Activated CD8-positive, alpha-beta T cell treated with anti-CD3 and anti-CD28 coated beads, Interleukin-2, amount 10 ng/mL, durations not matched to agents 7 days and 5 days (primary cell): ENCODE measurements at regions of chr12 and their contacts with region 1.

Region 1: GRCh38 chr12:56158029-56158925 is at the start of gene MYL6:
- DNase-seq: peak; percentile 97
- ATAC-seq: peak; percentile 83
- H3K4me3 Mint-ChIP-seq: peak within 1 kb of the TSS; percentile 90
- H3K27ac Mint-ChIP-seq: peak within 1 kb of the TSS; percentile 96
- H3K4me1 Mint-ChIP-seq: peaks cover 61% of the 10 kb centered on the region
- H3K27me3 Mint-ChIP-seq: no peaks in the 10 kb centered on the region
- total RNA-seq, gene MYL6: 1,527 to 1,542 TPM

Region 2: GRCh38 chr12:56117778-56118687 is 40.2 kb before region 1 on chr12 and contains the start of gene ZC3H10:
- CTCF ChIA-PET with region 1: interaction called, 20 read pairs
- POLR2A ChIA-PET with region 1: interaction called, 77 read pairs
- DNase-seq: peak; percentile 100
- ATAC-seq: peak; percentile 76
- H3K4me3 Mint-ChIP-seq: peak within 1 kb of the TSS; percentile 100
- H3K27ac Mint-ChIP-seq: peak within 1 kb of the TSS; percentile 100
- H3K4me1 Mint-ChIP-seq: peaks cover 39% of the 10 kb centered on the region
- H3K27me3 Mint-ChIP-seq: no peaks in the 10 kb centered on the region
- total RNA-seq, gene ZC3H10: 9.1 to 10.6 TPM

Region 3: GRCh38 chr12:56127888-56128669 is 30.2 kb before region 1 on chr12 and contains the start of gene ESYT1:
- CTCF ChIA-PET with region 1: interaction called, 50 read pairs
- POLR2A ChIA-PET with region 1: interaction called, 77 read pairs
- DNase-seq: peak; percentile 100
- ATAC-seq: peak; percentile 91
- H3K4me3 Mint-ChIP-seq: peak within 1 kb of the TSS; percentile 88
- H3K27ac Mint-ChIP-seq: peak within 1 kb of the TSS; percentile 91
- H3K4me1 Mint-ChIP-seq: peaks cover 70% of the 10 kb centered on the region
- H3K27me3 Mint-ChIP-seq: no peaks in the 10 kb centered on the region
- total RNA-seq, gene ESYT1: 317 to 333 TPM

Region 4: GRCh38 chr12:56143870-56144269 is 14.4 kb before region 1 on chr12:
- CTCF ChIA-PET with region 1: no interaction called
- POLR2A ChIA-PET with region 1: interaction called, 10 read pairs
- DNase-seq: no peak
- ATAC-seq: no peak
- H3K4me3 Mint-ChIP-seq: no peak overlapping the region
- H3K27ac Mint-ChIP-seq: peak overlapping the region; percentile 68
- H3K4me1 Mint-ChIP-seq: peaks cover 41% of the 10 kb centered on the region
- H3K27me3 Mint-ChIP-seq: no peaks in the 10 kb centered on the region

Region 5: GRCh38 chr12:56172831-56173230 is 14.6 kb after region 1 on chr12:
- CTCF ChIA-PET with region 1: interaction called, 3 read pairs
- POLR2A ChIA-PET with region 1: interaction called, 26 read pairs
- DNase-seq: no peak
- ATAC-seq: no peak
- H3K4me3 Mint-ChIP-seq: no peak overlapping the region
- H3K27ac Mint-ChIP-seq: no peak overlapping the region
- H3K4me1 Mint-ChIP-seq: peaks cover 1% of the 10 kb centered on the region
- H3K27me3 Mint-ChIP-seq: no peaks in the 10 kb centered on the region

Region 6: DNA sequence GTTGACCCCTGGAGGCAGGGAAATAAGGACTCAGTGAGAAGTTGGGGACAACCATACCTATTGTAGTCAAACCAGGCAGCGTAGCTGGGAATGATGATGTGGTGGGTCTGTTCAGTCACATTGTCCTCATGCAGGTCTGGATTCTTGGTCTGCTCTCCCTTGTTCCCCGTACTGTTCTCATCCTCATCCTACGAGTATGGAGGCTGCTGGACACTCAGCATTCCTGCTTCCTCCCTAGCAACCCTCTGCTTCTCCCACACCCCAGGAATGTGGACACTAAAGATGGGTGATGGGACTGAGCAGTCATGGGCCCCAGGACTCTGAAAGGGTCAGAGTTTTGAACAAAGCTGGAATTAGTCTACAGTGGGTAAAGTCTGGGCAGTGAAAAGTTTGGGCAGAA is 20.1 kb after region 1 on chr12:
- CTCF ChIA-PET with region 1: interaction called, 3 read pairs
- POLR2A ChIA-PET with region 1: interaction called, 26 read pairs
- DNase-seq: no peak
- ATAC-seq: no peak
- H3K4me3 Mint-ChIP-seq: no peak overlapping the region
- H3K27ac Mint-ChIP-seq: no peak overlapping the region
- H3K4me1 Mint-ChIP-seq: no peaks in the 10 kb centered on the region
- H3K27me3 Mint-ChIP-seq: no peaks in the 10 kb centered on the region